Mammary epithelial cell (primary cell): ENCODE measurements at regions of chr15 and their contacts with region 1.

Region 1: DNA sequence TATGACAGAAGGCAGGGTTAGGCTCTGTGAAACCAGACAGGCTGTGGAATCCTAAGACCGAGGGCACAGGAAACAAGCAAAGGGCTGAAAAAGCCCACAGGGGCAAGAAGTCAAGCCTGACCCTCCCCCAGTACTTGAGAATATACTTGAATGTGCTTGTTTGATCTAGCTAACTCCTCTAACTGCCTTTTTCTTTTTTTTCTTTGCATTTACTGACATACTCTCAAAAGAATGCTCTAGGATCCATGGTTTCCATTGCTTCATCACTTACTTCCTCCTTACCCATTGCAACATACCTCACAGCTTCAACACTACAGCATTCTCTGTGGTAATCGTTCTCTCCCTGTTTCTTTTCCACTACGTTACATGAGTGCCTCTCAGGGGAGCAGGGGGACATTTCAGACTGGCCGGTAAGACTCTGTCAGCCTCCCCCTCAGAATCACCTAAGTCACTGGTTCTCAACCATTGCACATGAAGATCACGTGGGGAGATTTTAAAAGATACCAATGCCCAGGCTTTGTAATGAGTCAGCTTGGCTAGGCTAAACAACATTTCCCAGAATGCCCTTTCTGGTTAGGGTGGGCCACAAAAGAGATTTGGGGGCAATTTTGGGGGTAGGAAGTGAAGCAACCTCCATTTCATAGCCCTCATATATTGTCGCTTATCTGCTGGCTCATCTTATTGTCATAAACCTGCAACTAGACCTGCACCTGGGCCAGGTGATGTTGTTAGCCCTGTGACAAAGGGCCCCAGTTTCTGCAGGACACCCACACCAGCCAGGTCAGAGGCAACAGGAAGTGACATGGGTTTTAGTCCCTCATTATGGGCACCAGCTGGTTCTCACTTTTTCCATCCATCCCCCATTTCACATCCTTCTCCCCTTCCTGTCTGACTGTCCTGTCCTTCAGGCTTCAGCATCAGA is 24.6 kb upstream of the RSL24D1 start:
- DNase-seq: peak; percentile 84
- H3K4me3 ChIP-seq: no peak overlapping the region
- H3K27ac ChIP-seq: peak overlapping the region; percentile 54
- H3K4me1 ChIP-seq: peaks cover 16% of the 10 kb centered on the region
- H3K27me3 ChIP-seq: no peaks in the 10 kb centered on the region
- CTCF ChIP-seq: no peak

Region 2: DNA sequence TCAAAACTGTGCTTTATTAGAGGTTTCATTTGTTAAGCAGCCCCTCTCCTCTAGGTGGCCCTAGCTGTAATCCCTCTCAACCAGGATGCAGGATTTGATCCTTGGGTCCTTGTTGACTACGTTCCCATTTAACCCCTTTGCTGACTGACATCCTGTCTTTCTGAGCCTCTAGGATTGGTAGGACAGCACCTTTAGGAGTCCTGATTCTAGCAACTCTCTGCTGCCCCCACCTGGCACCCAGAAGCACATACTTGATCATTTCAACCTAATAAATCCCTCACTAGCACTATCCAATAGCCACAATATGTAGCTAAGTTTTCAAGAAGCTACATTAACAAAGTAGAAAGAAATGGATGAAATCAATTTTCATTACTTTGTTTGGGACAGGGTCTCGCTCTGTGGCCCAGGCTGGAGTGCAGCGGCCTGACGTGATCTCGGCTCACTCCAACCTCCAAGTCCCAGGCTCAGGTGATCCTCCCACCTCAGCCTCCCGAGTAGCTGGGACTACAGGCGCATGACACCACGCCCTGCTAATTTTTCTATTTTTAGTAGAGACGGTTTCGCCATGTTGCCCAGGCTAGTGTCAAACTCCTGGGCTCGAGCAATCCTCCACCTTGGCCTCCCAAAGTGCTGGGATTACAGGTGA is 52.9 kb before region 1 on chr15:
- CTCF ChIA-PET with region 1: no interaction called
- dilution Hi-C with region 1: no loop called
- in situ Hi-C with region 1: no loop called
- intact Hi-C with region 1: no loop called
- DNase-seq: peak; percentile 54
- H3K4me3 ChIP-seq: no peak overlapping the region
- H3K27ac ChIP-seq: no peak overlapping the region
- H3K4me1 ChIP-seq: no peaks in the 10 kb centered on the region
- H3K27me3 ChIP-seq: no peaks in the 10 kb centered on the region
- CTCF ChIP-seq: peak; percentile 63 to 81

Region 3: DNA sequence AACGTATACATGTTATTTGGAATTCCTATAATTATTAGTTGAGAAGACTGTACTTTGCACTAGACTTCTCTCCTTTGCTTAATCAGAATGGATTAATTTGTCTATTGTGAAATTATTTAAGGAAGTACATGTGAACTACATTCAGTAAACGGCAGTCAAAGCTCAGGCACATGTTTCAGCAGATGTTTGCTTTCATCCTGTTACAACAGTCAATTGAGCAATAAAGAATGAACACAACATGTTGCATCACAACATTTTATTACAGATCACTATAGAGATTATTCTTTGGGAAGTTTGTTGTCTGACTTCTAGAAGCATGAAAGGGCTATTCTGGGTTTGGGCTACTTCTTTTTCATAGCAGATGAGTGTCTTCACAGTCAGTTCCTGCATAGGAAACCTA is 29.0 kb after region 1 on chr15:
- CTCF ChIA-PET with region 1: interaction called, 5 read pairs
- dilution Hi-C with region 1: no loop called
- in situ Hi-C with region 1: no loop called
- intact Hi-C with region 1: loop called (anchors 1 kb)
- DNase-seq: peak; percentile 75
- H3K4me3 ChIP-seq: no peak overlapping the region
- H3K27ac ChIP-seq: peak overlapping the region; percentile 28
- H3K4me1 ChIP-seq: peaks cover 29% of the 10 kb centered on the region
- H3K27me3 ChIP-seq: no peaks in the 10 kb centered on the region
- CTCF ChIP-seq: no peak

Region 4: DNA sequence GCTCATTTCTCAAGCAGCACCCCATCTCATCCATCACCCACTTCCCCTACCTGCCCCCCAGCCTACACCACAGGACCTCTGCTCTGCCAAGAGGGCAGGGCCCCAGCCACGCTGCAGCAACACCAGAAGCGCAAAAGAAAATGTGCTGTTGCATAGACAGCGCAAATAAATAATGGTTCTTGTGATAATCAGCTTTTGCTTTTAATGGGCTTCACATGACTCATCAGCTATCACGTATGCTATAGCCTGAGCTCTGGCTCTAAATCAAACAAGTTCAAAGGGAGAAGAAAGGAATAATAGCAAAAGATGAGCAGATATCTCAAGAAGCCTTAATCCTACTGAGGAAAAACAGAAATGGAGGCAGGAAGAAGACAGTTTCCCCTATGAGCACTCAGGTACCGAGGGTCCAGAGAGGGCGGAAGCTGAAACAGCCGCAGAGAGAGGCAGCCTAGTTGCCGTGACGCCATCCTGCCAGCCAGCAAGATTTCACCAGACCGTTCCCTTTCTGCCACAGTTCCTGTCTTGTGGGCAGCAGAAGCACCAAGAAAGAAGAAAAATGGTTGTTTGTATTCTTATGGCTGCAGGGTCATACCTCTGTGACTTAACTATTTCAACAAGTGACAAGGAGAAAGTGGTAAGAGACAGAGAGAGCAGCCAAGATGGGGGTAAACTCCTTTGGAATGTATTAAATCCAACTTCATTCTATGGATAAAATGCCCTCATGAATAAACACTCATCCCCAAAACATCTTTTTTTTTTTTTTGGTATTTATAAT is 46.2 kb after region 1 on chr15:
- CTCF ChIA-PET with region 1: interaction called, 13 read pairs
- dilution Hi-C with region 1: no loop called
- in situ Hi-C with region 1: no loop called
- intact Hi-C with region 1: no loop called
- DNase-seq: no peak
- H3K4me3 ChIP-seq: no peak overlapping the region
- H3K27ac ChIP-seq: no peak overlapping the region
- H3K4me1 ChIP-seq: no peaks in the 10 kb centered on the region
- H3K27me3 ChIP-seq: no peaks in the 10 kb centered on the region
- CTCF ChIP-seq: no peak

Region 5: DNA sequence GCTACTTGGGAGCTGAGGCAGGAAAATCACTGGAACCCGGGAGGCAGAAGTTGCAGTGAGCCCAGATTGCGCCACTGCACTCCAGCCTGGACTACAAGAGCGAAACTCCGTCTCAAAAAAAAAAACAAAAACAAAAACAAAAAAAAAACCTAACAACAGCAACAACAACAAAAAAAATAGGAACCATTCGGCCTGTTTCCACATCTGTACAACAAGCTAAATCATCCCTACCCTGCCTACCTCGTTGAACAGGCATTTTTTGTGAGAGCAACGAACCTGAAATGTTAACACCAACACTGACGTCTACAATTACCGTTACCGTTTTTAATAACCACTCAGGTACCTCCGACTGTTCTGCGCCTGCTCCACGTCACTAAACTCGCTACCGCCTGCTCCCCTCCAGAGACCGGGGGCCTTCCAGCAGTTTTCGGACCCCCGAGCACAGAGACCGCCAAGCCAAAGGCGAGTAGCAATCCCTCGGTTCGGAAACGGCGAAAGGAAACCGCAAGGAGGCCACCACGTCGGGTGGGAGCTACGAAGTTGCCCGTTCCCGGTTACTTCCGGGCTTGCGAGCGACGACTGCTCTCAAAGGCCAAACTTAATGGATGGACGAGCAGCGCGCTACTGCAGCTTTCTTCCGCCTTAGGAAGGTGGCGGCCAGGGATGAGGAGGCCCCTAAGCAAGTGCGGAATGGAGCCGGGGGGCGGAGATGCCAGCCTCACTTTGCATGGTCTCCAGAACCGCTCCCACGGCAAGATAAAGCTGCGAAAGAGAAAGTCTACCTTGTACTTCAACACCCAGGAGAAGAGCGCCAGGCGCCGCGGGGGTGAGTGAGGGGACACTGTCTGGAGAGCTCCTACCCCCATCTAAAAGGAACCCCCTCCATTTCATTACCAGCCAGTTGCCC is 97.5 kb after region 1 on chr15 and contains the starts of genes PIGB and PIGBOS1:
- CTCF ChIA-PET with region 1: no interaction called
- dilution Hi-C with region 1: loop called (anchors 5 kb)
- in situ Hi-C with region 1: no loop called
- intact Hi-C with region 1: no loop called
- DNase-seq: peak; percentile 85
- H3K4me3 ChIP-seq: peak within 1 kb of the TSS; percentile 63 to 88 (median 67)
- H3K27ac ChIP-seq: peak within 1 kb of the TSS; percentile 89
- H3K4me1 ChIP-seq: peaks cover 4% of the 10 kb centered on the region
- H3K27me3 ChIP-seq: no peaks in the 10 kb centered on the region
- CTCF ChIP-seq: no peak
- total RNA-seq, gene PIGB: 23.8 to 24.4 TPM
- total RNA-seq, gene PIGBOS1: 3.8 to 10.9 TPM

Region 6: DNA sequence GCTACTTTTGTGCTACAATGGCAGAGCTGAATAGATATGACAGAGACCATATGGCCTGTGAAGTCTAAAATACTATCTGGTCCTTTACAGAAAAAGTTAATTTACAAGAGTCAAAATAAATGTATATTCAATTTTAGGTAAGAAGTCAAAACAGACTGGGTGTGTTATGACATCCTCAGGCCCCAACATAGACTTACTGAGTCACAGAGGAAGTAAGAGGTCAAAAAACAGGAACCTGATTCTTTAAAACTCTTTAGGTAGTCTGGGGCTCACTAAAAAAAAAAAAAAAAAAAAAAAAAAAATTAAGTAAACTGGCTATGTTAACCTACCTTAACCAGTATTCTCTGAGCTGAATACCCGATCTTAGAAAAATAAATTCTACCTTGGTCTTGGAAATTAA is 273.6 kb after region 1 on chr15:
- CTCF ChIA-PET with region 1: interaction called, 10 read pairs
- dilution Hi-C with region 1: no loop called
- in situ Hi-C with region 1: no loop called
- intact Hi-C with region 1: no loop called
- DNase-seq: no peak
- H3K4me3 ChIP-seq: no peak overlapping the region
- H3K27ac ChIP-seq: no peak overlapping the region
- H3K4me1 ChIP-seq: no peaks in the 10 kb centered on the region
- H3K27me3 ChIP-seq: no peaks in the 10 kb centered on the region
- CTCF ChIP-seq: no peak